ENCODE measurements at regions of chr1 and their contacts with region 1.

Region 1: DNA sequence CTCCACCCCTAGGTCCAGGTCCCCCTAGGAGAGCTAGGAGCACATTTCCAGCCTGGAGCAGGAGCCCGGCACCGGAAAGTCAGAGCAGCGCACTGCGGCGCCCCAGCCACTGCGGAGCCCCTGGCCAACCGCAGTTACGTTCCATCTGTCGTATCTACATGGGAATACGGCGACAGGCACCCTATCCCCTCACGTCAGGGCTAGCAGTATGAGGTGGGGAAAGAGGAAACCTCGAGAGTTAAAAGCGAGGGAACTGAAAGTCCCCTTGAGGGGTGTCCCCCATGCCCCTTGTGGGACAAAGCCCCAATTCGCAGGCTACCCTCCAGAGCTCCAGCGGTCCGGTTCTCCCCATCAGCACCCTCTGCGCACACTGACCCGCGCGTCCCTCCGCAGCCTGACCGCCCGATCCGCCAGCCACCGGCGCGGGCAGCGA is 995 bp downstream of the COLGALT2 start:
- DNase-seq: peak in 1 of 2 donors; percentile 81
- ATAC-seq: peak; percentile 71 to 80 (median 76)
- H3K4me3 ChIP-seq: peak overlapping the region; percentile 75
- H3K27ac ChIP-seq: peak overlapping the region; percentile 82
- H3K4me1 ChIP-seq: peaks cover 3% of the 10 kb centered on the region
- H3K27me3 ChIP-seq: peaks cover 0 to 3% (median 0%) of the 10 kb centered on the region in 3 donors
- CTCF ChIP-seq: no peak

Region 2: DNA sequence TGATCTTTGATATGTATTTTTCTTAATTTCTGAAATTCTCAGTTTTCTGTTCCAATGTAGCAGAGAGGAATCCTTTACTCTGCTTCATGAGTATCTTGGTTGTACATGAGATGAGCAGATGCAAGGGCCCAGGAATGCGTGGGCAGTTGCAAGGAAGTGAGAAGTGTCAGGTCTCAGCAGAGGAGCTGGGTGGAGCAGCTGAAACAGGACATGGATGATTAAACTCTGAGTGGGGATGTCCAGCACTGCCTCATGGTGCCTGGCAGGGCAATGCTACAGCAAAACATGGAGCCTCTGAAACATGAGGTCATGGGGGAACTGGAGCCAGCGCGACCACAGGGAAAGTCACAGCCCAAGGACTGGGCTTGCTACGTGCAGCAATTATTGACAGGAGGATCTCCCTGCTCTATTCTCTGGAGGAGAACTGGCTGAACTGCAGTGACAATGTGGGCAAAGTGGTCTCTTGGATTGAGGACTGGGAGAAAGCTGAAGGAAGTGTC is 47.4 kb before region 1 on chr1:
- intact Hi-C with region 1: loop called (anchors 5 to 10 kb)
- DNase-seq: peak; percentile 59 to 68
- ATAC-seq: peak; percentile 54 to 82 (median 64)
- H3K4me3 ChIP-seq: no peak overlapping the region
- H3K27ac ChIP-seq: no peak overlapping the region
- H3K4me1 ChIP-seq: peaks cover 7% of the 10 kb centered on the region
- H3K27me3 ChIP-seq: no peaks in the 10 kb centered on the region
- CTCF ChIP-seq: no peak

Region 3: DNA sequence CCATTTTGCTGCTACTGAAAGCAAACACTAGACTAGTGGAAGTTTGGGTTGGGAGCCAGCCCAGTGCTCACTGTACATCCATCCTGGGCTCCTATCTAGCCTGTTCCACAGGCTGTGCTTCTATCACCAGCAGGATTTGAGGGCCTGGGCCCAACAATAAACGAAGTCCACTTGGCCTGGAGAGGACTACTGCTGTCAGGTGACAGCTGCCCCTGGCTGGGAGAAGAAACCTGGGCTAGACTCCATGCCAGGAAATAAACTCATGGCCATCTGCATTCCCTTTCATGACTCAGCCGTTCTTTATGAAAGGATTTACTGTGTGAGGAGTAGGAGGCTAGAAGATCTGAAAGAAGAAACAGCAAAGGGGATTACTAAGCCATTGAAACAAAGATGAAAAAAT is 34.5 kb before region 1 on chr1:
- intact Hi-C with region 1: loop called in 1 of 2 experiments (anchors 5 kb)
- DNase-seq: no peak
- ATAC-seq: peak; percentile 82 to 97 (median 92)
- H3K4me3 ChIP-seq: no peak overlapping the region
- H3K27ac ChIP-seq: peak overlapping the region; percentile 43
- H3K4me1 ChIP-seq: no peaks in the 10 kb centered on the region
- H3K27me3 ChIP-seq: no peaks in the 10 kb centered on the region
- CTCF ChIP-seq: no peak